ENCODE measurements at regions of chr2 and their contacts with region 1.

Region 1: DNA sequence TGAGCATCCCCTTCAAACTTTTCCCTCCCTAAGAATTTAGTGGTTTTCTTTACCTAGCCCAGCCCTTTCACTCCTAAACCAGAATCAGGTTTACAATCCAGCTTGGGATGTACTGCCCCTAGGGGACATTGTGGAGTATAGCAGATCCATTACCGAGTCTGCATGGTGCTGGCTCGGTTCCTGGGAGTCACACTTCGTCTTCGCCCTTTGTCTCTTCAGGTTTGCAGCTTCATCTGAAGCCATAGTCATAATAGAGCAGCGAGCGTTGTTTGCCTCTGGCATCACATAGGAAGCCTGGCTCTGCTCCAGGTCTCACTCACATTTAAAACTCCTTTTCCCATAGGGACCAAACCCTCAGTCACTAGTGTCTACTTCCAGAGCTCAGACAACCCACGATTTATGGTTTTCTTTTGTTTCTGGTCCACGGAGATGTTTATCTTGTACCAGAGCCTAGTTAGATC is 16.8 kb upstream of the LYPD6 start:
- H3K4me3 Mint-ChIP-seq: no peak overlapping the region
- H3K27ac Mint-ChIP-seq: no peak overlapping the region
- H3K4me1 Mint-ChIP-seq: peaks cover 5% of the 10 kb centered on the region
- H3K27me3 Mint-ChIP-seq: peaks cover 13% of the 10 kb centered on the region

Region 2: GRCh38 chr2:149017116-149017985 is 296.2 kb before region 1 on chr2:
- intact Hi-C with region 1: loop called (anchors 2 kb)
- H3K4me3 Mint-ChIP-seq: no peak overlapping the region
- H3K27ac Mint-ChIP-seq: no peak overlapping the region
- H3K4me1 Mint-ChIP-seq: peaks cover 33% of the 10 kb centered on the region
- H3K27me3 Mint-ChIP-seq: peaks cover 13% of the 10 kb centered on the region

Region 3: DNA sequence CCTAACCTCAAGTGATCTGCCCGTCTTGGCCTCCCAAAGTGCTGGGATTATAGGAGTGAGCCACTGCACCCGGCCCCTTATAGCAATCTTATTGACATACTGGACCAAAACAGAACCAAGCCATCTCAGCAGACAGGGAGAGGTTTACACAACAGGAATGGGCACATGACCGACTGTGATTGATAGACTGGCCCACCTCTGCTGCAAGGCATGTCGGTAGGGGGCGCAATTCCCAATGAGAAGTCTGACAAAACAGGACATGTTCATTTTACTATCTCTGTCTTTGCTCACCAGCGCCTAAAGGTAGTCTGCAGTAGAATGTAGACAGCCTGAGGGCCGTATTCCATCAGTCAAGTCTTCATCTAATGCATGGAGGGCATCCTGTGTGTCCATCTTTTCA is 273.1 kb before region 1 on chr2:
- intact Hi-C with region 1: loop called (anchors 2 kb)
- H3K4me3 Mint-ChIP-seq: no peak overlapping the region
- H3K27ac Mint-ChIP-seq: no peak overlapping the region
- H3K4me1 Mint-ChIP-seq: no peaks in the 10 kb centered on the region
- H3K27me3 Mint-ChIP-seq: peaks cover 53% of the 10 kb centered on the region

Region 4: DNA sequence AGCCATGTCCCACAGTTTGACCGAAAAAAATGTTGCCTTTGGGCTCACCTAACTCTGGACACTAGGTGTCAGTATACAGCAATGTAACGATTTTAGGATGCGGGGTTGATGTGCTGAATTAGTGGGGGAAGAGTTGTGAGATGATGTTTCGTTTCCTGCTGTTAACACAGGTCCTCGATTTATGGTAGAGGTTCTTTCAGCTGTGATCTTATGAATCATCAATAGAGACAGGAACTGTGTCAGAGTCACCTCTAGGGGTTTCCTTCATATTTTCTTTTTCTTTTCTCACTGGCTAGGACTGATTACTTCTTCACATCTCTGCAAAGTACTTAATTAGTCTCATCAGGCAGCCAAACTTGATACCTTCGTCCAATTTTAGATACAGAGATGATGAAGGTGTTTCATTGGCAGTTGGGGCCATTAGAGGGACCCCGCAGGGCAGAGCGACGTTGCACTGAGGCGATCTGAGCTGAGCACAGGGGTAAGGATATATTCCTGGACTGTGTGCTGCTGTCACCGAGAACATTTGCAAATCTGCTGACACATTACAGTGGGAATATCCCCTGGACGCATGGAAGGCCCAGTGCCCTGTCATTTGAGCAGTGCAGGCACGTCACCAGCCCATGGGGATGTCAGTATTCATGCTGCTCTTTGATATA is 284.3 kb after region 1 on chr2:
- intact Hi-C with region 1: no loop called
- H3K4me3 Mint-ChIP-seq: no peak overlapping the region
- H3K27ac Mint-ChIP-seq: no peak overlapping the region
- H3K4me1 Mint-ChIP-seq: peaks cover 16% of the 10 kb centered on the region
- H3K27me3 Mint-ChIP-seq: peaks cover 9% of the 10 kb centered on the region

Region 5: DNA sequence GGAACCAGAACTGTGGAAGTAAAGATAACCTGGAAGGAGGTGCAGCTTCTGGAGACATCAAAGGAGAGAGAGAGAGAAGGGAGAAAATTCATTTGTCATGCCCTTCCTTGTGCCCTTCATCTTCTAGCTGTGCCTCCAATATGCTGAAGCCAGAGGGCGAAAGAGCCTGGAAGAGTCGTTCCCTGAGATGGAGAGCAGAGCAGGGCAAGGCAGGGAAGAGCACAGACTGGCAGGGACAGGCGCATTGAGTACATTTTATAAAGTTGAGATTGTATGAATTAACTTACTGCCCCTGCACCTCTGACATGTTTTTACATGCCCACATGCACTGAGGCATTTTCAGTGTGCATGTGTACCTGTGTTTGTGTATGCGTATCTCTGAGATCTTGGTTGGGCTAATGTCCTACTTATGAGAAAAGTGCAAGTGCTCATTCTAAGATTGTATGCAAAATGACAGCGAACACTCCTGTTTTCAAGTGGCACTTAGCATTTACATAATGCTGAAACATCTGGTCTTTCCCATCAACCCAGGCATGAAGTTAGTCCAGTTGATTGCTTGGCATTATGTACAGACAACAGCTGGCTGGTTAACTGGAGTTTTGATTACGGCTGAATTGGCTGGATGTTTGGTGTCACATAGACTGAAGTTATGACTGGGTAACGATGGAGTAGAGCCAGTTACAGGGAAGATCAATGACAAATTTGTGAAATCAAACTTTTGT is 297.7 kb after region 1 on chr2:
- intact Hi-C with region 1: no loop called
- H3K4me3 Mint-ChIP-seq: no peak overlapping the region
- H3K27ac Mint-ChIP-seq: no peak overlapping the region
- H3K4me1 Mint-ChIP-seq: no peaks in the 10 kb centered on the region
- H3K27me3 Mint-ChIP-seq: peaks cover 4% of the 10 kb centered on the region

Region 6: DNA sequence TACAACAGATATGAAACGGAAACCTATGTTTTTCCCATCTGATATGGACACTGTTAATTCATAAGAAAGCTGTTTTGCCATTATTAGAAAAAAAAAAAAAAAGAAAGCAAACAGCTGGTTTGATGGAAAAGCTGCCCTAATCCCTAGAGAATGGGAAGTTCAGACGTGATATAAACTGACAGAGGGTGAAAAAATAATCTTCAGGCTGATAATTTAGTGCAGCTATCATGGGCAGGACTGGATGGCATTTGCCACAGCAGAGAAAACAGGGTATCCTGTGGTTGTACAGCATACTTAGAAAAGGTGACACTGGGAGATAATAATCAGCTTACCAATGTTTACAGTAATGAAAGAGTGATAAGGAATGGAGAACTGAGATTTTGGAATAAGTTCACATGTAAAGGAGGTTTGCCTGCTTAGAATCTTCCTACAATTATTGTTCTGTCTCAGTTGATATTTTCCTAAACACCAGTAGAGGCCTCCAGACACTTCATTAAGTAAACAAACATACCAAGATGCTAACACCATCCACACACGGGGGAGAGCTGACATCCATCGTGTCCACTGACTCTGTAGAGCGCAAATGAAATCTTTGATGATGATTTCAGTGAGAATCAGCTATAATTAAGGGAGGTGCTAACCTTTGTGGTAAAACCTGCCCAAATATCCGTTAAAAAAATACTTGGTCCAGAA is 485.6 kb after region 1 on chr2:
- intact Hi-C with region 1: no loop called
- H3K4me3 Mint-ChIP-seq: no peak overlapping the region
- H3K27ac Mint-ChIP-seq: no peak overlapping the region
- H3K4me1 Mint-ChIP-seq: no peaks in the 10 kb centered on the region
- H3K27me3 Mint-ChIP-seq: no peaks in the 10 kb centered on the region